ENCODE measurements at regions of chr1 and their contacts with region 1.

Region 1: DNA sequence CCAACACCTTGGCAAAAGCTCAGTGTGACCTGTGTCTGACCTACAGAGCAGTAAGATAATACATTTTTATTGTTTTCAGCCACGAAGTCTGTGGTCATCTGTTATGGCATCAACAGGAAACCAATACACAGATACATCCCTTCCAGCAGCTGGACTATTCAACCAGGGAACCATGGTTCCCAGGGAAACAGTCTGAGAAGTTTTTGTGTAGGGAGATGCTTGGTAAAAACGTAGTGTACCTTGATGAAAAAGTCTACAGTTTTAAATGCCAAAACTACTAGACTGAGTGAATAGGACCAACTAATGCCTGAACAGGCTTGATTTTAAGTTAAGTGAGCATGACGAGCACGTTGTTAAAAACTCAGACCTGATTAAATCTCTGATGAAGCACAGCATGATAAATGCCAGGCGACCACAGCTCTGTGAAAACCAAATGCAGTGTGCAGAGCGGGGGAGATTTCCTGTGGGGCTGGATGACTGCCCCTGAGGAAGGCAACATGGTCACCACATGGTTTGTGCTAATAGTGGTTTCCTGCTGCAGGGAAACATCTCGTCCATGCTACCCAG is 228.9 kb downstream of the TNR start:
- DNase-seq: no peak
- H3K4me3 Mint-ChIP-seq: no peak overlapping the region
- H3K27ac Mint-ChIP-seq: no peak overlapping the region
- H3K4me1 Mint-ChIP-seq: peaks cover 22% of the 10 kb centered on the region
- H3K27me3 Mint-ChIP-seq: peaks cover 34% of the 10 kb centered on the region

Region 2: DNA sequence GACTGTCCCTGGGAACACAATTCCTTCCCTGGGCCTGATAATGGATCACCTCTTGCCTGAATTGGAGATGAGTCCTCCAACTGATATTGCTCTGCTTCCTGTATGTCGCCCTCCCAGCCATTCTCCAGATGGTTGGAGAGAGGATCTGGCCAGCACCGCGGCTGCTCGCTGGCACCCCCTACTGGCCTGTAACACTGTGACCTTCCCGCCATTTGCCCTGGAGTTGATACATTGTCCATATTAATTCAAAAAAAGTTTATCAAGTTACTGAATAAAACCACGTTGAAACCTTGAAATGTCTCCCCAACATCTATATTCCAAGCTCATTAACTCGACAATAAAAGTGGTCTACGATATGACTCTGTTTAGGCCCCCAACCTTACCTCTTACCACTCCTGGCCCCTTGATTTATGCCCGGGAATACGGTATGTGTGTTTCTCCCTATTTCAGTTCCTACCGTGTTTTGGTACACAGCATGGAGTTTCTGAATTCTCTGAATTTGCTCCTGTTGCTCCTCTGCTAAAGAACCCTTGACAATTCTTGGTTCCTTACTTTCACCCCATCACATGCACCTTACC is 80.1 kb before region 1 on chr1:
- intact Hi-C with region 1: no loop called
- DNase-seq: no peak
- H3K4me3 Mint-ChIP-seq: no peak overlapping the region
- H3K27ac Mint-ChIP-seq: no peak overlapping the region
- H3K4me1 Mint-ChIP-seq: no peaks in the 10 kb centered on the region
- H3K27me3 Mint-ChIP-seq: peaks cover 10% of the 10 kb centered on the region

Region 3: DNA sequence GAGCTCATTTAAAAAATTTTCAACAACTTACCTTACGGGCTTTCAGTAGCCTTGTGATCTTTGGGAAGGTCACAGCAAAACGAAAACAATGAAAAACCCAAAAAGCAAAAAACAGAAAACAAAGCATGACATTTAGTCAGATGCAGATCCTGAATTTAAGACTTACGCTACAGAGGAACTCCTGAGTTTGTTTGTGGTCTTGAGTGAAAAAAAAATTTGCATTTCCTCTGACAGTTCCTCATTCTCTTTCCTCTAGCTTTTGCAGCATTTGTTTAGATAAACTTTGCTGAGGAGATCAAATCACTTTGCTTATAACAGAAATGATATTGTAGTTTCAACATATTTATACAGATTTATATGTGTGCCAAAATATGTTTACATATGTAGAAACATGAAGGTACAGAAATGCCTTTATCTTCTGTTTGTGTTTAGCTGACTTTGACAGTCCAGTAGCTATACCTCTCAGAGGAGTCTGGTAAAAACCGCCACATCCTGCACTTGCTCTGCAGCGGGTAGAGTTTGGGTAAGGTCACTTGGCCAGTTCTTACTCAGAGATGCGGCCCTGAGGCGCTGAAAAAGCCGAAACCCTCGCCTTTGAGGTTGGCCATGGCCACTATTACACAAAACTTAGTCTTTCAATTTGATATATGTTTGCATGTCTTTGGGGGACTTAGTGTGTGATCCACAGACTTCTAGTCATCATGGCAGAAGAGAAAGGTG is 86.4 kb after region 1 on chr1:
- intact Hi-C with region 1: loop called (anchors 1 kb)
- DNase-seq: peak; percentile 14
- H3K4me3 Mint-ChIP-seq: peak overlapping the region; percentile 64
- H3K27ac Mint-ChIP-seq: peak overlapping the region; percentile 67
- H3K4me1 Mint-ChIP-seq: peaks cover 24% of the 10 kb centered on the region
- H3K27me3 Mint-ChIP-seq: peaks cover 15% of the 10 kb centered on the region

Measured in activated T-helper 2 cell treated with anti-CD3 and anti-CD28 coated beads, Interferon-gamma antibody, Interleukin-2, Interleukin-4, amounts not matched to agents 10 μg/mL and 5 μg/mL and 100 μg/mL, durations not matched to agents 14 hours and 24 hours and 36 hours (primary cell).